ENCODE measurements at regions of chr5 and their contacts with region 1.

Region 1: GRCh38 chr5:54905943-54906537 is 79.4 kb downstream of the ESM1 start:
- DNase-seq: peak; percentile 83
- H3K4me3 Mint-ChIP-seq: no peak overlapping the region
- H3K27ac Mint-ChIP-seq: no peak overlapping the region
- H3K4me1 Mint-ChIP-seq: peaks cover 50% of the 10 kb centered on the region
- H3K27me3 Mint-ChIP-seq: peaks cover 45% of the 10 kb centered on the region

Region 2: DNA sequence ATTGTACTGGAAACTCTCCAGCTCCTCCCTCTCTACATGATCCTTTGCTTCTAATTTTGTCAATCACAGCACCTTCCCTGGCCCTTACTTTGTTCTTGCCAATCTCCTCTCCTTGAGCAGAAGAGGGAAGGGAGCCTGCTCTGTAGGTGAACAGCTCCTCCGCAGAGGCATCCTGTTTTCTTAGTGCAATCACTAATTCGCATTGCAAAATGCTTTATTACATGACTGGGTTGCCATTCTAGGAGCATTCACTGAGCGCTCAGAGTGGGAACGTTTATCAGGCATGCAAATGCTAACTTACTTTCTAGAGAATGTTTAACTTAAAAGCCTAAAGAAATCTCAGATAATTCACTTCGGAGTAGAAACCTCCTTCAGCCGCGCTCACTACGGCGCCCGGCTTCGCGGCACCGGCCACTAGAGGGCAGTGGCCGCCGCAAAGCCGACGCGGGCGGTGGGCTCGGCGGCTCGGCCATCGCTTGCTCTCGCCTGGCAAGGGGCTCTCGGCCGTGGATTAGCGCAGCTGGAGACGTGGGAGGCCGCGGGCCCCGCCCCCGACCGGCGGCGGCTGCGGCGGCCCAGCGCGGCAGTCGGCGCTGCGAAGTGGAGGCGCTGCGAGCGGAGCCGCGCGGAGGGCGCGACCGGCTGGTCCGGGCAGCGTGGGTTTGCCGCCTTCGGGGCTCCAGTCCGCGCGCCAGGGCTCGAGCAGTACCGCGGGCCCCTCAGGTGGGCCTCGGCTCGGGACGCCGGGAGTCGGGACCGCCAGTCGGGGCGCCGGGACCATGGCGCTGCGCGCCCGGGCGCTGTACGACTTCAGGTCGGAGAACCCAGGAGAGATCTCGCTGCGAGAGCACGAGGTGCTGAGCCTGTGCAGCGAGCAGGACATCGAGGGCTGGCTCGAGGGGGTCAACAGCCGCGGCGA is 388.6 kb before region 1 on chr5 and contains the start of gene SNX18:
- CTCF ChIA-PET with region 1: interaction called, 12 read pairs
- DNase-seq: peak; percentile 93
- H3K4me3 Mint-ChIP-seq: peak within 1 kb of the TSS; percentile 83
- H3K27ac Mint-ChIP-seq: peak within 1 kb of the TSS; percentile 74
- H3K4me1 Mint-ChIP-seq: peaks cover 45% of the 10 kb centered on the region
- H3K27me3 Mint-ChIP-seq: peaks cover 23% of the 10 kb centered on the region

Region 3: DNA sequence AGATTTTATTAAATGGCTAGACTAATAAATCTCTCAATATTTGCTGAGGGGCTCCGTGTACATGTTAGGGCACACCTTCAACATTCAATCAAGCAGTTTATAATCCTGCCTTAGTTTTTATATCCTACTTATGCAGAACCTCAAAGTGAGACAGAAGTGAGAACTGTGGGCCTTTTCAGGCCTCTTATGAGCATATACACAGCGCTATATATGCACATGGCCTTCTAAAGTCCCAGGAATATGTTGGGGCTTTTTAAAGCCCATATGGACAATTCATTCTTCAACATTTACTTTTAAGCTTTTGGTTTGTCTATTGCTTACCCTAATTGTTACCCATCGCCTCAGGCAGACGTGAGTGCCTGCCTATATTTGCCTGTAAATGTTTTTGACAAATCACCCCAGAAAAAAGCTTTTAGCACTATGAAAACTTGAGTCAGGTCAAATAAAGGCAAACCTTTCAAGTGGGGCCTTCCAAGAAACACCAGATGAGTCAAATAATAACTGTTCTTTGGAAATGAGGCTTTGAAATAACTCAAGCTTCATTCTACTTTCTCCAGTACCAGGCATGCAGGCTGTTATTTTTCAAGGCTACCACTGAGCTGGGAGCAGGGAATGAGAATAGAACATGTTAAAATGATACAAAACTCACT is 21.2 kb after region 1 on chr5:
- CTCF ChIA-PET with region 1: interaction called, 10 read pairs
- DNase-seq: no peak
- H3K4me3 Mint-ChIP-seq: no peak overlapping the region
- H3K27ac Mint-ChIP-seq: peak overlapping the region; percentile 28
- H3K4me1 Mint-ChIP-seq: peaks cover 22% of the 10 kb centered on the region
- H3K27me3 Mint-ChIP-seq: peaks cover 6% of the 10 kb centered on the region

Region 4: DNA sequence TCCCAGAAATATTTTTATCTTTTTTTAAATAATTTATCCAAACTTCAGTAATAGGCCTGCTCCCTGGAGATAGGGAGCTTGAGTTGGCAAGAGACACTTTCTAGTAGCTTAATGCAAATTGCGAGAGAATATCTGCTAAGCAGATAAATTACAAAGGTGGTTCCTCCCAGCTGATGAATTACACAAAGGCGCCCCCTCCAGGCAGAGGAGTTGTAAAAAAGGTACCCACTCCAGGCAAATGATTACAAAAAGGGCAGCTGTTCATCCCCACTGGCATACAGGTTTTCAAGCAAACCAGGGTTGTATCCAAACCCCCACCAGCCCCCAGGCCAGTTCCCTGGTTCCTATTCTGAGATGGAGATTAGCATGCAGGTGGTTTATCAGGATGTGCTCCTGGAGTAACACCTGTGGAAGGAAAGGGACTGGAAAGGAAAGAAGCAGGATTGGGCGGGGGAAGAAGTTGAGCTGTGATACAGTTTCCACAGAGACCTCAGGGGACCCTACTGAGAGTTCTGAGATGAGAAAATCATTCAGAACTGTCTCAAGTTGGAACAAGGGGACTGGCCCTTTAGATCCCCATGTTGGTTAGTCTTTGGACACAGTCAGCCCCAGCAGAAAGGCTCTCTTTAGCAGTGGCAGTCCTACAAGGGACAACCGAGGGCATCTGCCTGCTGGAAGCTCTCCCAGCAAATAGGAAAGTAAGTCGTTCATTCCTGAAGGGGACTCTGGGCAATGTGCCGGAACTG is 53.8 kb after region 1 on chr5:
- CTCF ChIA-PET with region 1: interaction called, 67 read pairs
- DNase-seq: peak; percentile 44
- H3K4me3 Mint-ChIP-seq: no peak overlapping the region
- H3K27ac Mint-ChIP-seq: no peak overlapping the region
- H3K4me1 Mint-ChIP-seq: peaks cover 11% of the 10 kb centered on the region
- H3K27me3 Mint-ChIP-seq: peaks cover 42% of the 10 kb centered on the region

Region 5: DNA sequence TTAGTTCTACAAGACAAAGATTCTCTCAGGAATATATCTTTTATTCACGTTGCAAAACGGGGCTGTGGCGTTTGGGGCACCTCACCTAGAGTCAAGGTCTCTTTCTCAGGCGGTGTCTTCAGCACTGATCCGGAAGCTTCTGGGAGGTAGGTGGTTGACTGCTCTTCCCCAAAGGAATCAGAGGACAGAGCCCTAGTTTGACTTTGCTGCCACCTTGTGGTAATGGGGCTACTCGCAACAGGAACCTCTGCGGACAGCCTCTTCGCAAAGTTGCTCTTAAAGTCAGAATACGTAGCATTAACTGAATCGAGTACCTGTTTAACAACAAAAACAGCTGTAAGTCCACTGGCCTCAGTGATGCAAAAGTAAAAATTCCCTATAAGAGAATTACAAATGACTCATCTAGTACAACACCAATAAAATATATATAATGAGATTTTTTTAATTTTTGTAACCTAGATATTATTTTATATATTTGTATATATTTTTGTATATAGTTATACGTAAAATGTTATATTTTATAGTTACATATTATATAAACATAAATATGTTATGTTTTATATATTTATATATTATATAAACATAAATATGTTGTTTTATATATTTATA is 240.6 kb after region 1 on chr5:
- CTCF ChIA-PET with region 1: interaction called, 43 read pairs
- DNase-seq: peak; percentile 91
- H3K4me3 Mint-ChIP-seq: no peak overlapping the region
- H3K27ac Mint-ChIP-seq: no peak overlapping the region
- H3K4me1 Mint-ChIP-seq: peaks cover 35% of the 10 kb centered on the region
- H3K27me3 Mint-ChIP-seq: peaks cover 50% of the 10 kb centered on the region